Endothelial cell of umbilical vein (primary cell): ENCODE measurements at regions of chr1 and their contacts with region 1.

Region 1: DNA sequence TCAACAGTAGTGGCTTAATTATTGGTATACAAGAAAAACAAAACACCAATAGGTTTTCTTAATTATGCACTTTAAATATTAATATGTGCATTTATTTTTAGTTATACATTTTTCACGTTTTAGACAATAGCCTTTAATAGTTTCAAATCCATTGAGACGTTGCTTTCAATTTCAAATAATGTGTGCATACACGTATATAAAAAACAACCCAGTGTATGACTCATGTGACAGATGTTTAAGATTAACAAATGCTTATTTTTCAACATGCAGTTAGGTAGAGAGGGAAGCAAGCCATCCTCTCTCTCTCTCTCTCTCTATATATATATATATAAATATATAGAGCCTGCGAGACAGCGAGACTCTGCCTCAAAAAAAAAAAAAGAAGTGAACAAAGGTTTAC is 24.3 kb downstream of the EYA3 start:
- DNase-seq: peak; percentile 72
- H3K4me3 ChIP-seq: peak overlapping the region in 1 of 3 experiments; percentile 62
- H3K27ac ChIP-seq: peak overlapping the region; percentile 75
- H3K4me1 ChIP-seq: peaks cover 48% of the 10 kb centered on the region
- H3K27me3 ChIP-seq: no peaks in the 10 kb centered on the region
- CTCF ChIP-seq: no peak
- POLR2A ChIP-seq: no peak

Region 2: GRCh38 chr1:27300341-27301051 is 763.6 kb before region 1 on chr1:
- CTCF ChIA-PET with region 1: no interaction called
- POLR2A ChIA-PET with region 1: no interaction called
- dilution Hi-C with region 1: no loop called
- intact Hi-C with region 1: no loop called
- DNase-seq: peak; percentile 89
- H3K4me3 ChIP-seq: no peak overlapping the region
- H3K27ac ChIP-seq: no peak overlapping the region
- H3K4me1 ChIP-seq: no peaks in the 10 kb centered on the region
- H3K27me3 ChIP-seq: no peaks in the 10 kb centered on the region
- CTCF ChIP-seq: peak; percentile 95 to 98
- POLR2A ChIP-seq: no peak

Region 3: GRCh38 chr1:27992276-27992675 is 71.8 kb before region 1 on chr1:
- CTCF ChIA-PET with region 1: interaction called, 3 read pairs
- POLR2A ChIA-PET with region 1: no interaction called
- dilution Hi-C with region 1: no loop called
- intact Hi-C with region 1: loop called (anchors 1 kb)
- DNase-seq: peak; percentile 60
- H3K4me3 ChIP-seq: no peak overlapping the region
- H3K27ac ChIP-seq: peak overlapping the region; percentile 46
- H3K4me1 ChIP-seq: peaks cover 35% of the 10 kb centered on the region
- H3K27me3 ChIP-seq: no peaks in the 10 kb centered on the region
- CTCF ChIP-seq: no peak
- POLR2A ChIP-seq: no peak

Region 4: GRCh38 chr1:28028873-28029654 is 35.0 kb before region 1 on chr1:
- CTCF ChIA-PET with region 1: interaction called, 3 read pairs
- POLR2A ChIA-PET with region 1: no interaction called
- dilution Hi-C with region 1: no loop called
- intact Hi-C with region 1: loop called (anchors 2 kb)
- DNase-seq: peak; percentile 75
- H3K4me3 ChIP-seq: peak overlapping the region in 1 of 3 experiments; percentile 19
- H3K27ac ChIP-seq: peak overlapping the region; percentile 90
- H3K4me1 ChIP-seq: peaks cover 19% of the 10 kb centered on the region
- H3K27me3 ChIP-seq: no peaks in the 10 kb centered on the region
- CTCF ChIP-seq: no peak
- POLR2A ChIP-seq: no peak

Region 5: GRCh38 chr1:28078680-28079626 is 14.9 kb after region 1 on chr1:
- CTCF ChIA-PET with region 1: interaction called, 25 read pairs
- POLR2A ChIA-PET with region 1: interaction called, 4 read pairs
- dilution Hi-C with region 1: no loop called
- intact Hi-C with region 1: no loop called
- DNase-seq: peak; percentile 78
- H3K4me3 ChIP-seq: no peak overlapping the region
- H3K27ac ChIP-seq: no peak overlapping the region
- H3K4me1 ChIP-seq: peaks cover 3% of the 10 kb centered on the region
- H3K27me3 ChIP-seq: no peaks in the 10 kb centered on the region
- CTCF ChIP-seq: no peak
- POLR2A ChIP-seq: no peak

Region 6: GRCh38 chr1:28235755-28236655 is 171.9 kb after region 1 on chr1 and contains the start of gene ATP5IF1:
- CTCF ChIA-PET with region 1: no interaction called
- POLR2A ChIA-PET with region 1: no interaction called
- dilution Hi-C with region 1: no loop called
- intact Hi-C with region 1: no loop called
- DNase-seq: peak; percentile 99
- H3K4me3 ChIP-seq: peak within 1 kb of the TSS; percentile 49 to 84 (median 64)
- H3K27ac ChIP-seq: peak within 1 kb of the TSS; percentile 1
- H3K4me1 ChIP-seq: peaks cover 17% of the 10 kb centered on the region
- H3K27me3 ChIP-seq: no peaks in the 10 kb centered on the region
- CTCF ChIP-seq: no peak
- POLR2A ChIP-seq: peak; percentile 97
- total RNA-seq, gene ATP5IF1: 133 and 144 TPM in 2 replicates